ENCODE measurements at regions of chr11 and their contacts with region 1.

Region 1: DNA sequence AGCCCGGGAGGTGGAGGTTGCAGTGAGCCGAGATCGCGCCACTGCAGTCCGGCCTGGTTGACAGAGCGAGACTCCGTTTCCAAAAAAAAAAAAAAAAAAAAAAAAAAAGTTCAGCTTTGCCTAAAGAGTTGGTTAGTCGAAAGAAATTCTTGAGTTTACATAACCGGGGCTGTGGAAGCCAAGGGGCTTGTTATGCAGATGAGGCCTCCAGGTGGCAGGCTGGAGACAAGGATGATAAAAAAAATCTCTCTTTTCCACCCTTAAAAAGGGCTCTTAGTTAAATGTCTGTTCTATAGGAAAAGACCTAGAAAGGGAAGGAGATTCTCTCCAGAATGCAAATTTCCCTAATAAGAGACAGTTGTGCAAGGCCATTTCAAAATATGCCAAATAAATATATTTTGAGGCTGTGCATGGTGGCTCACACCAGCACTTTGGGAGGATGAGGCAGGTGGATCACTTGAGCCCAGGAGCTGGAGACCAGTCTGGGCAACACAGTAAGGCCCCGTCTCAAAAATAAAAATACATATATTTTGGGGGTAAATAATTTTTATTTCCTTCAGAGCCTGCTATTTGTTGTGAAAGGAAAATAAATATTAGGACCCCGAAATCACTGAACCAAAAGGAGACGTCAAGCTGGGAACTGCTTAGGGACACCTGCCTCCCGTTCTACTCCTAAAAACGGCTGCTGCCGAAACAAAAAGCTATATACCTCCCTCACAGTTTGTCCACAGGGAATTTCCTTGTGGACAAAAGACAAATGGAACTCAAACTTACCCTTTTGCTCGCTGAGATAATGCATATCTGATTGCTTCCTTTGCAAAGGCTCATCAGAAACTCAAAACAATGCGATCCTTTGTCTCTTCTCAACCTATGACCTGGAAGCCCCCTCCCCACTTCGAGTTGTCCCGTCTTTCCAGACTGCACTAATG is 2.4 kb upstream of the IFITM2 start:
- DNase-seq: peak; percentile 76
- ATAC-seq: peak; percentile 23

Region 2: DNA sequence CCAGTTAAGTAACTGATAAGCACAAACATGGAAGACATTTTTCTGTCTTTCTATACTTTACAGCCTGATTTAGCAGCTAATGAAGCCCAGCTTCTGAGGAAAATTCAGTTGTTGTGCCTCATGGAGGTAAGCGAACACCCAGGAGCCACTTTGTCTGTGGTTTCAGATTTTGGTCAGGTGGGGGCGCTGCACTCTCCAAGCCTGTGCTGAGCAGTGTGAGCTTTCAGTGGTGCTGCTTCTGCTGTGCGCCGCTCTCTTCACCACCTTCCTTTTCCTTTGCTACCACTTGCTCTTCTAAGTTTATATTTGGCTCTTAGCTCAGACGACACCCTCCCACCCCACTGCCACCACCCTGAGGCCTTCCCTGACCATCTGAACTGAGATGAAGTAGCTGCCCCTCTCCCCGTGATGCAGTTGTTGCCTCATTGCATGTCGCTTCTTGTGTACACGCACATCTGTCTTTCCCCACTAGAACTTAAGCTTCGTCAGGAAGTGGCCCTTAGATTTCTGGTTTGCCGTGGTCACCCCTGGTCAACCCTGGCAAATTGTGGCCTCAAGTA is 54.4 kb before region 1 on chr11:
- intact Hi-C with region 1: no loop called
- DNase-seq: peak; percentile 72
- ATAC-seq: peak; percentile 79

Region 3: DNA sequence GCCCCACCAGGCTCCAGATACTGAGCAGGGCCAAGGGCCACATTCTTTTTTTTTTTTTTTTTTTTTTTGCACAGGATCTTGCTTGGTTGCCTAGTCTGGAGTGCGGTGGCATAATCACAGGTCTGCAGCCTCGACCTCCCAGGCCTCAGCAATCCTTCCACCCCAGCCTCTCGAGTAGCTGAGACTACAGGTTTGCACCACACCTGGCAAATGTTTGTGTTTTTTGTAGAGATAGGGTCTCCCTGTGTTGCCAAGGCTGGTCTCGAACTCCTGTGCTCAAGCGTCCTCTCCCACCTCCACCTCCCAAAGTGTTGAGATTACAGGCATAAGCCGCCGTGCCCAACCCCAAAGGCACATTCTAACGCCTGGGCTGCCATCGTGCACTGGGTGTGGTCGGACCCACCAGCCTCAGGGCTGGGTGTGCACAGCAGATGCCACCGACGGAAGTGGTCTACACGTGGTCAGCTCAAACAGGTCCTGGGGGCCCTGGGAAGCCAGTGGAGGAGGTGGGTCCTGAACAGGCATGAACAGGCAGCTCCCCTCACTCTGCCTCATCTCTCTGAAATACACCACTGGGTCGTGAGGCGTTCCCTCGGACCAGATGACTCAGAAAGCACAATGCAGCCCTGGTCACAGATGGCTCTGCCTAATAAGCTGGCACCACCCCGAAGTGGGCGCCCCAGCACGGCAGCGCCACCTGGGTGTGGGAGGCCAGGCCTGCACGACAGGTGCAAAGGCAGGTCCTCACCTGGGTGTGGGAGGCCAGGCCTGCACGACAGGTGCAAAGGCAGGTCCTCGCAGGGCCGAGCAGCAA is 59.0 kb after region 1 on chr11:
- intact Hi-C with region 1: loop called (anchors 5 kb)
- DNase-seq: peak; percentile 44
- ATAC-seq: no peak